Naive thymus-derived CD8-positive, alpha-beta T cell (primary cell): ENCODE measurements at regions of chr2 and their contacts with region 1.

Region 1: DNA sequence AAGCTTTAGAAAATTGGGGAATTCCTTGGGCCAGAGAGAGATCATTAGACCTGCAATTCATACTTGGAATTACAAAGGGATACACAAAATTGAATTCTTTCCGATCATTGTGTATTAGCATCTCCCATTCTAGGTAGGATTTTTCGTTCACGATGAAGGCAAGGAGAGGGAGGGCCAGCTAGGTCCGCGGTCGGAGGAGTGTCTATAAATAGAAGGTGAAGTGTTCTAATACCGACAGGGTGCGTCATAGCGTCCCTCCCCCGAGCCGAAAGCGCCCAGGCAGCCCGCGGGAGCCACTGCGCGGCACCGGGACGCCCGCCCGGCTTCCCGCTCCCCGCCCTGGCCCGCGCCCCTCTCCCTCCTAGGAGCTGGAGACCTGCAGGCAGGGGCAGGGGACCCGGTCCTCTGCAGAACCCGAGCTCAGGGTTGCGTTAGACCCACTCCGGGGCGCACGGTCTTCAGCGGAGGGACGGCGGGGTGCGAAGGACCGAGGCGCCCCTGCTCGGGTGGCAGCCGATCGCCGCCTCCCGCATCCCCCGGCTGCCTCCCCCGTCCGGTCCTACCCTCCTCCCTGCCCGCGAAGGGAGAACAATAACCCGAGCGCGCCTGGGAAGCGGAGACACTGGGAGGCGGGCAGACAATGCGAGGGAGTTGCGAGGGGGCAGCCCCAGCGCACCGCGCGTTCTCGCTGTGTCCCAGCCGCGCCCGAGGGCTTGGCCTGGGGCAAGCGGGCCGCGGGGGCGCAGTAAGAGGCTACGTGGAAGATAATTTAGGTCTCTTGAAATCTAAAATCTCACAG is 114.2 kb upstream of the SERTAD2 start:
- DNase-seq: peak; percentile 51 to 85 (median 57)
- ATAC-seq: peak; percentile 73 to 75
- H3K4me3 Mint-ChIP-seq: peak overlapping the region; percentile 92 to 99 (median 94)
- H3K27ac Mint-ChIP-seq: peak overlapping the region; percentile 90 to 99 (median 96)
- H3K4me1 Mint-ChIP-seq: peaks cover 11 to 26% (median 17%) of the 10 kb centered on the region in 4 donors
- H3K27me3 Mint-ChIP-seq: no peaks in the 10 kb centered on the region

Region 2: DNA sequence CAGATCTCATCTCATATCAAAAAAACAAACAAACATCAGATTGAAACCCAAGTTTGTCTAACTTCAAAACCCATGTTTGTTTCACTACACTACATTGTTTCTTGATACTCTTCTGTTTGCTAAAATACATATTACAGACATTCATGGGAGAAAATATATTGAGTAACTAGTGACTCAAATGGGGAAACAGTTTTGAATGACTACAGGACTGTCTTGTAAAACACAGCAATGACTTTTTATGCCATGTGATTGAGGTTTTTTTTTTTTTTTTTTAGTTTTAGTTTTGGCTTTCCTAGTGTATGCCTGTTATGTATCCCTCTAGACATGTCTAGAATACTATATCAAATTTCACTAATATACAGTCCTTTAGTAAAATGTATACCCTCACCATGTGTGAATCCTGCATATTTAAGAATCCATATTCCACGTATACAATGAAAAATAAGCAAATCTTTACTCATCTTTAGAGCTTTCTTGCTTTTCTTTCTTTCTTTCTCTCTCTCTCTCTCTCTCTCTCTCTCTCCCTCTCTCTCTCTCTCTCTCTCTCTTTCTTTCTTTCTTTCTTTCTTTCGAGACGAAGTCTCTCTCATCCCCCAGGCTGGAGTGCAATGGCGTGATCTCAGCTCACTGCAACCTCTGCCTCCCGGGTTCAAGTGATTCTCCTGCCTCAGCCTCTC is 67.6 kb before region 1 on chr2:
- POLR2A ChIA-PET with region 1: no interaction called
- DNase-seq: no peak
- ATAC-seq: no peak
- H3K4me3 Mint-ChIP-seq: peak overlapping the region in 1 of 10 donors; percentile 6
- H3K27ac Mint-ChIP-seq: peak overlapping the region in 3 of 10 donors; percentile 3 to 51 (median 40)
- H3K4me1 Mint-ChIP-seq: peaks cover 18 to 37% (median 31%) of the 10 kb centered on the region in 4 donors
- H3K27me3 Mint-ChIP-seq: no peaks in the 10 kb centered on the region

Region 3: DNA sequence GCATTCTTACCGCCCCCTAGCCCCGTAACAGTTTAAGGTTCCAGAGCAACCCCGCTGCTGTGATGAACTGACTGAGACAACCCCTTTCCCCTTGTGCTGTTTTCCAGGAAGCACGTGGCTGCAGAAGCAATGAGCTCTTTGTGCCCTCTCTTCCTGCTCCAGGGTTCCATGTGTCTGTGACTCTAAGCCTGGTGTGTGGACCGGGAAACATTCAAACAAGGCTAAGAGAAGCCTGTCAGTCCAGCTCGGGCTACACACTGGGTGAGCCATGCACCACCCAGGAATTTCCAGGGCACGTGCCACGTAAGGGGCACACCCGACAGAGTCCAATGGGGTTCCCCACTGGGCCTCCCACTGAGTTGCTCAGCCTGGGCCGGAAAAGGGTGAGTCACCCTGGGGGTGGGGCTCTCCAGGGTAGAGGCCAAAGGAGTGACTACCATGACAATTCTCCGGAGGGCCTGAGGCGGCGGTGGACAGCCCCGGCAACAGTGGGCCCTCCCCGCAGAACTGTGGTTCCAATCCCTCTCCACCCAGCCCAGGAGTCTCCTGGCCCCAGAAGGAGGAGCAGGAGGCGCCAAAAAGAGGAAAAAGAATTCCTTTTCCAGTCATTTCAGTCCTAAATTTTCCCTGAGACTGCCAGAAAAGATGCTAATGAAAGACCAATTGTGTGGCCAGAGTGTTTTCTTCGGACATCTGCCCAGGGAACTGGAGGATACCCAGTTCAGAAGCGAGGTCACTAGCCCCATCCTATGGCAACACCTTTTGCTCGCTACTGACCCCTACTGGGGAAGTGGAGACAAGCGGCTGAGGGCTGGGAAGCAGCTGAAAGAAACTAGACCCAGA is 63.5 kb after region 1 on chr2:
- POLR2A ChIA-PET with region 1: interaction called, 11 read pairs
- DNase-seq: peak; percentile 57 to 91 (median 78)
- ATAC-seq: peak; percentile 95 to 96
- H3K4me3 Mint-ChIP-seq: peak overlapping the region in 5 of 10 donors; percentile 17 to 50 (median 33)
- H3K27ac Mint-ChIP-seq: peak overlapping the region in 6 of 10 donors; percentile 19 to 56 (median 40)
- H3K4me1 Mint-ChIP-seq: peaks cover 0 to 17% (median 5%) of the 10 kb centered on the region in 4 donors
- H3K27me3 Mint-ChIP-seq: peaks cover 0 to 7% (median 0%) of the 10 kb centered on the region in 5 donors